PC-9 (cell line): ENCODE measurements at regions of chr3 and their contacts with region 1.

Region 1: DNA sequence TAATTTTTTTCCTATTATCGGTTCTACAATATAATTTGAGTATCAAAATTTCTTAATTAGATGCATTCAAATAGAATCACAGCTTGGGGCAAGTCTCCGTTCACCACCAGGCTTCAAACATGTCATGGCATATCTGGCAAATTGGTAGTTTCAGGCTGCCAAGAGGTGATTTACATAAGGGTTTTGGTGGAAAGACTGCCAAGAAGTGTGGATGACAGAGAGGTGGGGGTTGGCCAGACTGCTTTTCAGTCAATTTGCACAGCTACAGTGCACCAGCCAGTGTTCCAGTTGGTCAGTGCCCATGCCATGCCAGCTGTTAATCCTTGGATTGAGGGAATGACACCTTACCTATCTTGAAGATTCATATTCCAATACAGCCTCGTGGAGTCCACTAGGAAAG is 8.4 kb upstream of the GSK3B start:
- DNase-seq: no peak
- H3K4me3 ChIP-seq: no peak overlapping the region
- H3K27ac ChIP-seq: no peak overlapping the region
- H3K4me1 ChIP-seq: peaks cover 13% of the 10 kb centered on the region; the same call in 1 of the 2 replicates
- H3K27me3 ChIP-seq: no peaks in the 10 kb centered on the region
- CTCF ChIP-seq: no peak

Region 2: DNA sequence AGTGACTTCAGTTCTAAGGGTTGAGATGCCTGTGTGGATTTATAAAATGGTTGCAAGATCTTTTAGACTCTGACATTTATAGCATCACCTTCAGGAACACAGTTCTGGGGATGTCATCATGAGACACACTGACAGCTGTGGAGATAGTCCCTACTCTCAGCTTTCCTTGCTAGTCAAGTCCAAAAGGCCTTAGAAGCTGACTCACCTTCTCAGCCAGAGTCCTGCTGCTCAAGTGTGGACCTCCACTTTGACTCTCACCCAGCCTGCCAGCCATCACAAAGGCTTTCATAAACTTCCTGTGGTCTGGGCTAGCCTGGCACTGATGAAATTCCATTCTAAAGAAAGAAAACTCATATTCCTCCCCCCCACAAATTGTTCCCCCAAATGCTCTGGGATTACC is 684.0 kb before region 1 on chr3:
- CTCF ChIA-PET with region 1: interaction called, 17 read pairs
- POLR2A ChIA-PET with region 1: no interaction called
- intact Hi-C with region 1: no loop called
- DNase-seq: no peak
- H3K4me3 ChIP-seq: no peak overlapping the region
- H3K27ac ChIP-seq: no peak overlapping the region
- H3K4me1 ChIP-seq: no peaks in the 10 kb centered on the region
- H3K27me3 ChIP-seq: no peaks in the 10 kb centered on the region
- CTCF ChIP-seq: no peak

Region 3: DNA sequence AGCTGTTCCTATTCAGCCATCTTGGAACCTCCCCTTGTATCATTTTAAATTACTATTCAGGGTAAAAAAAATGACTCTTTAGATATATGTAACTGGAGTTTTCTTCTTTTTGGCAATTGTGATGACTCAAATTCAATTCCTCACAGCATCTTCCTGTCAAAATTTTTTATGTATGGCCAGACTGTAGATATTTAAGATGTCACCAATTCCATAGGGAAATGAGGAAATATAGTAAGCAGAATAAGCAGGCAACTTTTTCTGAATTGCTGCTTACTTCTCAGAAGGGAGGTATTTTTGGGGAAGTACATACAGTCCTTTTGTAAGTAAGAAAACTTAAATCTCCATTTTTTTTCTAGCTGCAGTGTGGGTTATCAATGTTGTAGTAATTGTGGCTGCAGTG is 1761.1 kb after region 1 on chr3:
- CTCF ChIA-PET with region 1: no interaction called
- POLR2A ChIA-PET with region 1: interaction called, 16 read pairs
- intact Hi-C with region 1: no loop called
- DNase-seq: no peak
- H3K4me3 ChIP-seq: no peak overlapping the region
- H3K27ac ChIP-seq: no peak overlapping the region
- H3K4me1 ChIP-seq: no peaks in the 10 kb centered on the region
- H3K27me3 ChIP-seq: no peaks in the 10 kb centered on the region
- CTCF ChIP-seq: no peak